ENCODE measurements at regions of chr3 and their contacts with region 1.

Region 1: DNA sequence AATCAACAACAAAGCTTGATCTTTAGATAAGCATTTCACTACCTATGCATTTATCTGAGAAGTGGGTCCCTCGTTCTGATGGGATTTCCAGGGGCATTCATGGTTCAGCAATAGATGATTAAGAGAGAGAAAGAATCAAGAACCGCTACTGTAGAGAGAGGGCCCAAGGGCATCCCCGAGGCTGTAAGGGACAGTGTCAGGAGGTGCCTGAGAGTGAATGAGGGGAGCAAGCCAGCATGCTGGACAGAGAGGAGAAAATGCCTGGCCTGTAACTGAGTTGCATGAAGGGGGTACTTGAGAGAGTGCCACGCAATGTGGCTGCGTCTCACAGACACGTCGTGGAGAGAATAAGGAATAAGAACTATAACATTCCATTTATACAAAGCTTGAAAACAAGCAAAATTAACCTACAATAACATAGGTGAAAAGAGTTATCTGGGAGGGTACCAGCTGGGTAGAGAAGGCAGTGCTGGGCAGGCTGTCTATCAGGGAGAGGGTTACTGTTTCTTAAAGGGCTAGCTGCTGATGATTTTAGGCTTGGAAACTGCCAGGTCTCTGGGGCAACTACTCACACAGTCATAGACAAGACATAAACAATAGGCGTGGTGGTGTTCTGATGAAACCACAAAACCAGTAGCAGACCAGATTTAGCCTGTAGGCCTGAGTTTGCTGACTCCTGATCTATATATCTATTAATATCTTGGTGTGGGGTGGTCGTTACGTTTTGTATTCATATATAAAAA is 374.6 kb upstream of the CFAP20DC start:
- DNase-seq: peak; percentile 33
- ATAC-seq: peak; percentile 71
- H3K4me3 Mint-ChIP-seq: no peak overlapping the region
- H3K27ac Mint-ChIP-seq: no peak overlapping the region
- H3K4me1 Mint-ChIP-seq: peaks cover 44% of the 10 kb centered on the region
- H3K27me3 Mint-ChIP-seq: no peaks in the 10 kb centered on the region

Region 2: GRCh38 chr3:59411186-59411585 is 13.3 kb before region 1 on chr3:
- CTCF ChIA-PET with region 1: interaction called, 14 read pairs
- POLR2A ChIA-PET with region 1: no interaction called
- DNase-seq: no peak
- ATAC-seq: no peak
- H3K4me3 Mint-ChIP-seq: no peak overlapping the region
- H3K27ac Mint-ChIP-seq: no peak overlapping the region
- H3K4me1 Mint-ChIP-seq: peaks cover 13% of the 10 kb centered on the region
- H3K27me3 Mint-ChIP-seq: no peaks in the 10 kb centered on the region

Region 3: GRCh38 chr3:59444294-59444671 is 19.8 kb after region 1 on chr3:
- CTCF ChIA-PET with region 1: interaction called, 10 read pairs
- POLR2A ChIA-PET with region 1: interaction called, 3 read pairs
- DNase-seq: peak; percentile 36
- ATAC-seq: peak; percentile 68
- H3K4me3 Mint-ChIP-seq: peak overlapping the region; percentile 53
- H3K27ac Mint-ChIP-seq: peak overlapping the region; percentile 85
- H3K4me1 Mint-ChIP-seq: peaks cover 46% of the 10 kb centered on the region
- H3K27me3 Mint-ChIP-seq: no peaks in the 10 kb centered on the region